ENCODE measurements at regions of chr11 and their contacts with region 1.

Region 1: DNA sequence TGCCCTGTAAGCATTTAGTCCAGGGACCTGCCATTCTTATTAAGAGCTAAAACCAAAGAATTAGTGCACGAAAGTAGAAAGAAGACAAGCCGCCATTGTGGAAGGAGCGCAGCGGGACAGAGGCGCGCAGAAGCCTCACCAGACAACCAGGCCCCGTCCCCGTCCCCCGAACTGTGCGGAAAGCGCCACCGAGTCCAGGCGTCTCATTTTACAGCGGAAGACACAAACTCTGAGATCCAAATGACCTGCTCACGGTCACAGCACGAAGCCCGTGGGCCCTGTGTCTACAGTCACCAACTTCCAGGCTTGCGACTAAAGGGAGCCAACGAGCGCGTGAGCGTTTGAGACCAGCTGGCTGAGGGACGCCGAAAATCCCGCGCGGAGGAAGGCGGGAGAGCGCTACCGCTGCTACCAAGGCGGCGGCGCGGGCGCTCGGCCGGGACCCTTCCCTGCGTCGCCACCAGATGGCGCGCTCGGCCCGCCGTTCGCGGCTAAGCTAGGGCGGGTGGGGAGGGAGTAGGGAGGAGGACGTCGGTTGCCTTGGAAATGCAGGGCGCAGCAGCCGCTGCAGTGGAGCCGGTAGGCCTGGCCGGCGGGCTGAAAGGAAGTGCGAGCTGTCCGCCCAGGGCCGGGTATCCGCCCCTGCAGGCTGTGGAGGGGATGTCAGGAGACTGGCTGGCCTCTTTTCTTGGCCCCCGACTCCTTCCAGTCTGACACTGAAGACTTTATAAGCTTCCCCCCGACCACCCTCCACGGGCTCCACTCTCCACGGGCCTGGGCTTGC is 434 bp upstream of the CCDC83 start:
- DNase-seq: peak; percentile 89 to 91
- H3K4me3 ChIP-seq: peak overlapping the region; percentile 34
- H3K4me1 ChIP-seq: peaks cover 9% of the 10 kb centered on the region
- H3K27me3 ChIP-seq: no peaks in the 10 kb centered on the region

Region 2: DNA sequence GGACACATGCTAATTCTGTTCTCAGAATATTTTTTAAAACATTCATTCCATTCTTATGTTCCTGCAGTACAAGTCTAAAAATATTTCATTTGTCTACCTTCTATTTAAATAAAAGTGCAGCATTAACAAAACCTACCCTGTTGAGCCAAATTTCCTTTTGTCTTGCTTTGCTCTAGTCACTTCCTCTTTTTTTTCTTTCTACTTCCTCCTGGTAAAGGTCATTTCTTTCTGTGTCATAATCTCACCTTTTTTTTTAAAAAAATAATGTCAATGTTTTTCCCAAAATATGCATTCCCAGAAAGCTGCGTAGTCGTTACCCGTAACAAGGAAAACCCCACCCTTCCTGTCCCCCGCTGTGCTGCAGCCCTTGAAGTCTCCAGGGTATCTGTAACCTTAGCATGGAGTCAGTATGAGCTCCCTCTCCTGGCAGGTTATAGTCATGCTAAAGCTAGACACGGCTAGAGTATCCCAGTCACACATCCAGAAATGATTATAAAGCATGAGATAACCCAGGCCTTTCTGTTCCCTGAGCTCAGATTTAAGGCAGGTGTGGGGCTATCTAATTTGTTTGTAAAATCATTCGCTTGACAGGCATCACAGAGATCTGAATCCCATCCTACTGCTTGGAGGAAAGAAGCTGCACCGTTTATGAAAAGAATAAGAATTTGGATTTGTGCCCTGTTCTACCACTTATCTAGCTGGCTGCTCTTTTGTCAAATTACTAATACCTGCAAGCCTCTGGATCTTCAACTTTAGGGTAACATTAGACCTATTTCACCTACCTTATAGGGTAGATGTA is 338.7 kb after region 1 on chr11:
- in situ Hi-C with region 1: loop called (anchors 10 kb)
- DNase-seq: peak; percentile 75 to 83
- H3K4me3 ChIP-seq: no peak overlapping the region
- H3K4me1 ChIP-seq: no peaks in the 10 kb centered on the region
- H3K27me3 ChIP-seq: no peaks in the 10 kb centered on the region; the same call in 1 of the 2 replicates

Region 3: GRCh38 chr11:86291466-86292262 is 436.9 kb after region 1 on chr11:
- in situ Hi-C with region 1: loop called (anchors 10 kb)
- DNase-seq: peak in 1 of 2 experiments; percentile 78
- H3K4me3 ChIP-seq: no peak overlapping the region
- H3K4me1 ChIP-seq: no peaks in the 10 kb centered on the region
- H3K27me3 ChIP-seq: no peaks in the 10 kb centered on the region

Region 4: GRCh38 chr11:86360775-86361395 is 506.1 kb after region 1 on chr11:
- in situ Hi-C with region 1: no loop called
- DNase-seq: peak in 1 of 2 experiments; percentile 47
- H3K4me3 ChIP-seq: no peak overlapping the region
- H3K4me1 ChIP-seq: peaks cover 39% of the 10 kb centered on the region
- H3K27me3 ChIP-seq: no peaks in the 10 kb centered on the region

Region 5: GRCh38 chr11:86386746-86387145 is 532.0 kb after region 1 on chr11:
- in situ Hi-C with region 1: no loop called
- DNase-seq: no peak
- H3K4me3 ChIP-seq: no peak overlapping the region
- H3K4me1 ChIP-seq: no peaks in the 10 kb centered on the region
- H3K27me3 ChIP-seq: no peaks in the 10 kb centered on the region

Measured in HAP-1 (cell line).